ENCODE measurements at regions of chr15 and their contacts with region 1.

Region 1: DNA sequence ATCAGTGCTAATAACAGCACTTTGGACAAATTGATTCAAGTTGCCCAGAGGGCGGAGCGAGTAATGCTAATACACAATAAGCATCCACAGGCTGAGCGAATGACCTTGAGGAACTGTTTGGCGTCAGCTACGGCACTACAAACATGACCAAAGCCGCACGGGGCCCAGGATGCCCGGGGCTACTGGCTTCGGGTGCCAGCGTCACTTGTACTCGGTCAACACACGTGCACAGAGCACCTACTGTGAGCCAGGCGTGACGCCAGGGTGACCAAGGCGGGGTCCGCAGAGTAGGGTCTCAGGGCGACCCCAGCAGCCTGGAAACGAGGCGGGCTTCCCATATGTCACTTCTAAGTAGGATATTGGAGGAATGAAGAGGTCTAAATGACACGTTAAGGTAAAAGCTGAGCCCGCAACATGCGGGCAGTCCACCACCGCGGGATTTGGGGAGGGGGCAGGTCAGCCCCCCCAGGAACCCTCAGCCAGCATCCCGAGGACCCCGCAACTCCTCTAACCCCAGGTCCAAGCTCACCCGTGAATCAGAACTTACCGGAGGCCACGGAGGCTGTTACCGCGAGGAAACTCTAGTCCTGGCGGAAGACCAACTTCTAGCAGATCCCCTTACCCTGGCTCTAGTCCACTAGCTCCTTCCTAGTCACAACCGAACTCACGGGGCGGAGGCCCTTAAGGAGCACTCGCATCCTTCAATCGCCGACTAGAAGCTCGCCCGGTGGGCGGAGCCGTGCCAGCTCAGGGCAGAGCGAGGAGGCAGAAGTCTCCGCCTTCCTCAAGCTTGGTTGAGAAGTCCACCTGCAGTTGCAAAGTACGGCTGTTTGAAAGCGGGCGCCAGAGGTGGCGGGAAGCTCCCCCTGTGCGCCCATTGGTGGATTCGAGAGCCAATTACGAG is at the start of gene CEP152:
- DNase-seq: peak; percentile 98
- ATAC-seq: peak; percentile 97
- H3K4me3 Mint-ChIP-seq: peak within 1 kb of the TSS; percentile 79
- H3K27ac Mint-ChIP-seq: peak within 1 kb of the TSS; percentile 95
- H3K4me1 Mint-ChIP-seq: peaks cover 24% of the 10 kb centered on the region
- H3K27me3 Mint-ChIP-seq: no peaks in the 10 kb centered on the region
- total RNA-seq, gene CEP152: 34.4 to 42.2 TPM

Region 2: GRCh38 chr15:48177766-48178647 is 632.7 kb before region 1 on chr15 and contains the start of gene MYEF2:
- CTCF ChIA-PET with region 1: no interaction called
- POLR2A ChIA-PET with region 1: no interaction called
- intact Hi-C with region 1: loop called in 1 of 2 experiments (anchors 2 kb)
- DNase-seq: peak; percentile 89
- ATAC-seq: peak; percentile 91
- H3K4me3 Mint-ChIP-seq: peak within 1 kb of the TSS; percentile 70
- H3K27ac Mint-ChIP-seq: peak within 1 kb of the TSS; percentile 86
- H3K4me1 Mint-ChIP-seq: peaks cover 21% of the 10 kb centered on the region
- H3K27me3 Mint-ChIP-seq: peaks cover 8% of the 10 kb centered on the region
- total RNA-seq, gene MYEF2: 23.8 to 27.7 TPM

Region 3: GRCh38 chr15:48330855-48331795 is 479.5 kb before region 1 on chr15 and contains the start of gene DUT:
- CTCF ChIA-PET with region 1: interaction called, 3 read pairs
- POLR2A ChIA-PET with region 1: no interaction called
- intact Hi-C with region 1: loop called in 1 of 2 experiments (anchors 1 kb)
- DNase-seq: peak; percentile 89
- ATAC-seq: peak; percentile 84
- H3K4me3 Mint-ChIP-seq: peak within 1 kb of the TSS; percentile 82
- H3K27ac Mint-ChIP-seq: peak within 1 kb of the TSS; percentile 95
- H3K4me1 Mint-ChIP-seq: peaks cover 28% of the 10 kb centered on the region
- H3K27me3 Mint-ChIP-seq: no peaks in the 10 kb centered on the region
- total RNA-seq, gene DUT: 371 to 500 TPM

Region 4: DNA sequence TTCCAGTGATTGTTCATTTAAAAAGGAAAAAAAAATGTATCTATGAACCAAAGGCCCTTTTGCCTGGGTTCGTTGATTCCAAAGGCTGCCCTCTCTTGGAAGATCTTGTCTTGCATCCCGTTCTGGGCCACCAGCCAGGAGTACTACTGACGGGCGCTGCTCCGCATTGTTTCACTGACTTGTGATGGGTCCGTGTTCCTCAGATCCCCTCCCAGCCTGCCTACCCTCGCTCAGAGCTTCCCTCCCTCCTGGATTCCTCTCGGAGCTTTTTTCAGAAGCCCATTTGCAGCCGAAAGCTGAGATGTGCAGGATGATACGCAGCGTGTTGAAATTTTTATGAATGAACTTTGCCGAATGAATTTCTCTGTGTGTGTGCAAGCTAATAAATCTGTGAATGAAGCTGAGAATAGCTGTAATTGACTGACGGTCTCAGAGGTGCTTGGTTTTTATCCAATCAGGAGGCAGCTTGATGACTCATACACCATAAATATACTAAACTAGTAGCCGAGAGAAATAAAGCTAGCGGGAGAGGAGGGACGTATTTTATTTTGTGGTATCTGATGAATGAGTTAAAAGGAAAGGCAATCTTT is 153.0 kb after region 1 on chr15 and contains the start of gene SHC4:
- CTCF ChIA-PET with region 1: no interaction called
- POLR2A ChIA-PET with region 1: no interaction called
- intact Hi-C with region 1: loop called in 1 of 2 experiments (anchors 2 kb)
- DNase-seq: peak; percentile 29
- ATAC-seq: peak; percentile 45
- H3K4me3 Mint-ChIP-seq: peak within 1 kb of the TSS; percentile 69
- H3K27ac Mint-ChIP-seq: peak within 1 kb of the TSS; percentile 84
- H3K4me1 Mint-ChIP-seq: peaks cover 34% of the 10 kb centered on the region
- H3K27me3 Mint-ChIP-seq: peaks cover 38% of the 10 kb centered on the region
- total RNA-seq, gene SHC4: 1.4 TPM

Region 5: GRCh38 chr15:49046220-49047102 is 235.8 kb after region 1 on chr15 and contains the start of gene SECISBP2L:
- CTCF ChIA-PET with region 1: interaction called, 3 read pairs
- POLR2A ChIA-PET with region 1: interaction called, 4 read pairs
- intact Hi-C with region 1: loop called (anchors 1 to 5 kb)
- DNase-seq: peak; percentile 95
- ATAC-seq: peak; percentile 97
- H3K4me3 Mint-ChIP-seq: peak within 1 kb of the TSS; percentile 92
- H3K27ac Mint-ChIP-seq: peak within 1 kb of the TSS; percentile 84
- H3K4me1 Mint-ChIP-seq: peaks cover 22% of the 10 kb centered on the region
- H3K27me3 Mint-ChIP-seq: no peaks in the 10 kb centered on the region
- total RNA-seq, gene SECISBP2L: 22.4 to 36.8 TPM

Region 6: DNA sequence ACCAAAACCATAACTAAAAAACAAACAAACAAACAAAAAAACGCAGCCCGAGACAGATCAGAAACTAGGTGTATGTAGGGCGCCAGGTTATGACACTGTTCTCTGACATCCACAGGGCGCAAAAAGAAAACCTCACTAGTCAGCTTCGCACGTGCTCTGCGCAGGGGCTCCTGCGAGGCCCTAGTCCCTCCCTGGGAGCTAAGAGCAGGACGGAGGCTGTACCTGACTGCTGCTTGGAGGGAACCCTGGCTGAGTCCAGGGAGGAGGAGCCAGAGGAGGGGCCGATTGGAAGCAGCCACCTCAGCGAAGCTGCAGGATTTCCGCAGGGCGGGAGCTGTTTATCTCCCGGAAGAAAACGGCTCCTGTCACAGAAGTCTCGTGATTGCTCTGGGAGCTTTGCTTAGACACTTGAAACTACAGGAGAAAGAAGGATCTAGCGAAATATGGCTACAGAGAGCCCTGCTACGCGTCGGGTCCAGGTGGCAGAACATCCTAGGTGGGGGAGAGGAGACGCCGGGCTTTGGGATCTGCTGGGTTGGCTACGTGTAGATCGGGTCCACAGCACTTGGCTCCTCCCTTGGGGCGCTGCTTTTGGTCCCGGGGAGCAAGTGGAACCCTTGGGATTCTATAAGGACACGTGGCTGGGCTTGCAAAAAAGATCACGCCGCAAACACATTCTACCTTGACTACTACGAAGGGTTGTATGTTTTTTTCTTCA is 359.4 kb after region 1 on chr15 and contains the start of gene GALK2:
- CTCF ChIA-PET with region 1: no interaction called
- POLR2A ChIA-PET with region 1: interaction called, 3 read pairs
- intact Hi-C with region 1: loop called in 1 of 2 experiments (anchors 1 kb)
- DNase-seq: peak; percentile 90
- ATAC-seq: peak; percentile 99
- H3K4me3 Mint-ChIP-seq: peak within 1 kb of the TSS; percentile 82
- H3K27ac Mint-ChIP-seq: peak within 1 kb of the TSS; percentile 90
- H3K4me1 Mint-ChIP-seq: peaks cover 29% of the 10 kb centered on the region
- H3K27me3 Mint-ChIP-seq: no peaks in the 10 kb centered on the region
- total RNA-seq, gene GALK2: 19.9 to 27.1 TPM

Region 7: DNA sequence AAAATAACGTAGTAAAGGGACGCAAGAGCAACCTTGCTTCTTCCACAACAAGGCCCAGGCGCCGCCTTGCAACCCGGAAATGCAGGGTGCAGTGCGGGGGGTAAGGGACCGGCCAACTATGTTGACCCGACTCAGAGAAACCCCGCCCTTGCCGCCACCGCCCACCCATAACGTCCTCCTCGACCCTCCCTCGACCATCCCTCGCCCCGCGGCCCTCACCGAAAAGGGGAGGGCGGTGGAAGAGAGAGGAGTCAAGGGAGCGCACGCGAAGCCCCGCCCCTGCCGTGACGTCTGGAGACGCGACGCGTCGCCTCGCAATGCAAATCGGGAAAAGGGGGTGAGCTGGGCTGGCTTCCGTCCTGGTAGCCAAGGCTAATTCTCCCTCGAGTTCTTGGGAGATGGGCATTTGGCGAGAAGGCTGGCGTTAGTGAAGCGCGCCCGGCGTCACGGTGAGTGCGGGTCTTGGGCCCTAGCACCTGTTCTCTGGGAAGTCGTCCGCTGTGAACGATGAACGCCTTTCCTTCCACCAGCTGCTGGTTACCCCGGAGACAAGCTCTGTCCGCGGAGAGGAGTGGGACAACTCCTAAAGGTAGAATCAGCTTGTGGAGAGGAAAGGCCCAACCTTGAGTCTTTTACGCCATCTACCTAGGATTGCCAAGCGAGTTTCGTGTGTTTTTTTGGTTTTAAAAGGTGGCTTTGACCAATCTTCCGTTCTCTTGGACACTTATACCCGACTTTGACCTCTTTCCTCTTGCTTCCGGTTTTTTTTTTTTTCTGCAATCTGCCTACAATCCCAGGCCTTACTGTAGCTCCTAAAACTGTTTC is 1613.6 kb after region 1 on chr15 and contains the start of gene USP8:
- CTCF ChIA-PET with region 1: no interaction called
- POLR2A ChIA-PET with region 1: no interaction called
- intact Hi-C with region 1: loop called in 1 of 2 experiments (anchors 2 kb)
- DNase-seq: peak; percentile 97
- ATAC-seq: peak; percentile 98
- H3K4me3 Mint-ChIP-seq: peak within 1 kb of the TSS; percentile 88
- H3K27ac Mint-ChIP-seq: peak within 1 kb of the TSS; percentile 92
- H3K4me1 Mint-ChIP-seq: peaks cover 32% of the 10 kb centered on the region
- H3K27me3 Mint-ChIP-seq: no peaks in the 10 kb centered on the region
- total RNA-seq, gene USP8: 39.8 to 45.3 TPM